ENCODE measurements at regions of chr1 and their contacts with region 1.

Region 1: DNA sequence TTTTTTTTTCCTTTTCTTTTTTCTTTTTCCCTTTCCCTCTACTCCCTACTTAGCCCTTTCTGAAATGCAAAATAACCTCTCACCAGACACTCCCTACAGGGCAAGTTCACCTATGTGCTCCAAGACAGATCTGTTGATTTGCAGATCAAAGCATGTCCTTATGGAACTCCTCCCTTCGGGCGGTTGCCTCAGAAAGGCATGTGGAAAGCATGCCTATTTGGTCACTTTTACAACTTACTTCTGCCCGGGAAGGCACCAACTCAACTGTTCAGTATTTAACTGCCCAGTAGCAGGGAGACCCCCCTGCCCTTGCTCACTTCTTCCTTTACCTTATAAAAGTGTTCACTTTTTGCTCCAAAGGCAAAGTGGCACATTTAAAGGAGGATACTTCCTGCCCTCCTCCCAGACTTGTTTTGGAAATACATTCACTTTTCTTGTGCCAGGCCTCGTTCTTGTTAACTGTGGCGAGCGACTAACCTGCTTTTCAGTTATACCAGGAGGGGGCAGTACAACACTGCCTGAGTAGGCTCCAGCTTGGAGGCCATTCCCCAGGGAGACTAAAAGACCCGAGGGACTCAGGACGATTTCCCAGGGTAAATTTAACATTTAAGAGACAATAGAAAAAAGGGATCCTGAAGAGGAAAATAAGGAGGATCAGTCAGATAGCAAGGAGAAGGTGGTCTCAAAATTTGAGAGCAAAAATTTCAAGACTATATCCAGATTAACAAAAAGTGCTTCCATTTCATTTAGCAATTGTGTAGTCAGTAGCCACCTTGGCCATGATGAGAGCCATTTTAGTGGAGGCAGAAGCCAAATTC is 12.3 kb upstream of the SLAMF7 start:
- DNase-seq: no peak
- ATAC-seq: peak; percentile 65

Region 2: DNA sequence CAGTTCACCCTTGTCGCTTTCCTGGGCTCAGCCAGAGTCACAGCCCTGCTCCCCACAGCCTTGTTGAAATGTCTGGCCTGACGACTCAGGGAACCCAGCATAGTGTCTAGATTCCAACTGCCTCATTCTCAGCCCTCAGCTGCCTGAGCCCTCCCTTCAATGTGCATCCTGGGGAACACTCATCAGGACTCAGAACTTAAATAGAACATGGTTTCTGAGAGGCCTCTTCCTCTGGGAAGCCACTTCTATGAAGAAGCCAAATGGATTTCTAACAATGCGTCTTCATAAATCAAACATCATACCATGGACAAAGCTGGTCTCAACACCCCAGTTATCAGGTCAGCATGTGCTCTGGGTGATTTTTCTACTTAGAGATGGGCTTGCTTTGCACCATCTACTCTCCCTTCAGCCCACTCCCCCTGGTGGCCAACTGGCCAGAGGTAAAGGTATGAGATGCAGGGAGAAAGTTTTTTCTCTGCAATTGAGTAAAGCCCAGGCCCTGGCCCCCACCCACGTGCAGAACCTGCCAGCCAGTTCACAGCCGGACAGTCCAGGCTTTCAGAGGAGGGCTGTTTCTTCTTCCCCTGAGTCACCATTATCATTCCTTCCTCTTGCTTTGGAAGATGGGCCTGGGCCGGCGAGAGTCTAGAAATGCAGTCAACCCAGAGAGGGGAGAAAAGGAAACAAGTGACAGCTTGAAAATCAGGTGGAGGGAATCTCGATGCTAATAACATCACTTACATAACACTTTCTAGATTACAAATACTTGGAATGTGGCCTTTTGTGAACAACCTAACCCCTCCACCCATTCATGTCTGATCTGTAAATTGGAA is 103.8 kb after region 1 on chr1:
- intact Hi-C with region 1: loop called (anchors 5 kb)
- DNase-seq: peak; percentile 72
- ATAC-seq: no peak

Region 3: DNA sequence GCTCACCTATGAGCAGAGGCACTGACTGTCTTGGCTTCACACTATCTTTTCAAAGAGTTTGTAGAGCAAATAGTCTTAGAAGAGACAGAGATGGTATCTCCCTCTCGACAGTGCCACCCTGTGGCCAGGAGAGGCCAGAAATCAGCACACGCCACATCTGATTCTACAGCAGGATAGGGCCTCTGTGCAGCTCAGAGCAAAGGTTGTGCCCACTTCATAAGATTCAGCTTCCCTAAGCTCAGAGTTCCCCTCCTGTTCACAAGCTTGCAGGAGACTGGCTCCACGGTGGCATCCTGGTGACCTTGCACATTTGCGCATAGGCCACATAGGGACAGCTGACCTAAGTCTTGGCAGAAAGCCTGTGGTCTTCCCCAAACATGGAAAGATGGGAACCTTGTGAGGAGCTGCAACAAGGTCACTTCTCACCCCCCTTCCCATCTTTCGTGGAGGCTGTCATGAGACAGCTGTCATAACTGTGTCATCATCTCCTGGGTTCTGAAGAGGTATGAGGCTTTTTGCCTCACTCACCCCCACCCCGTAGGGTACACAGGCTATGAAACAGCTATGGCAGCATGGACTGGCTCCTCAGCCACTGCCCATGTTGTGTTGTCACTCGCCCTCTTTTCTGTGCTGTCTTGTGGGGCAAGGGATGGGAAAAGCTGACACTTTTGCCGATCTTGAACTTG is 224.9 kb after region 1 on chr1:
- intact Hi-C with region 1: loop called (anchors 5 kb)
- DNase-seq: no peak
- ATAC-seq: peak; percentile 76

Region 4: GRCh38 chr1:160997323-160998038 is 270.8 kb after region 1 on chr1:
- intact Hi-C with region 1: loop called (anchors 10 kb)
- DNase-seq: no peak
- ATAC-seq: peak; percentile 84

Region 5: GRCh38 chr1:161098210-161099068 is 371.7 kb after region 1 on chr1 and contains the start of gene KLHDC9:
- intact Hi-C with region 1: loop called (anchors 5 kb)
- DNase-seq: peak; percentile 78
- ATAC-seq: peak; percentile 64
- total RNA-seq, gene KLHDC9: 6.5 TPM